ENCODE measurements at regions of chr13 and their contacts with region 1.

Region 1: GRCh38 chr13:29472332-29472961 is 123.0 kb downstream of the SLC7A1 start:
- DNase-seq: peak; percentile 41 to 69 (median 51)
- ATAC-seq: peak; percentile 87
- H3K4me3 ChIP-seq: no peak overlapping the region
- H3K27ac ChIP-seq: no peak overlapping the region
- H3K4me1 ChIP-seq: peaks cover 0 to 8% of the 10 kb centered on the region in 2 experiments; a peak in 1 of 5 replicates
- H3K27me3 ChIP-seq: no peaks in the 10 kb centered on the region; a peak in 1 of 5 replicates
- CTCF ChIP-seq: peak; percentile 94 to 100 (median 99)
- EP300 ChIP-seq: no peak
- POLR2A ChIP-seq: no peak
- RAD21 ChIP-seq: peak; percentile 65 to 82

Region 2: DNA sequence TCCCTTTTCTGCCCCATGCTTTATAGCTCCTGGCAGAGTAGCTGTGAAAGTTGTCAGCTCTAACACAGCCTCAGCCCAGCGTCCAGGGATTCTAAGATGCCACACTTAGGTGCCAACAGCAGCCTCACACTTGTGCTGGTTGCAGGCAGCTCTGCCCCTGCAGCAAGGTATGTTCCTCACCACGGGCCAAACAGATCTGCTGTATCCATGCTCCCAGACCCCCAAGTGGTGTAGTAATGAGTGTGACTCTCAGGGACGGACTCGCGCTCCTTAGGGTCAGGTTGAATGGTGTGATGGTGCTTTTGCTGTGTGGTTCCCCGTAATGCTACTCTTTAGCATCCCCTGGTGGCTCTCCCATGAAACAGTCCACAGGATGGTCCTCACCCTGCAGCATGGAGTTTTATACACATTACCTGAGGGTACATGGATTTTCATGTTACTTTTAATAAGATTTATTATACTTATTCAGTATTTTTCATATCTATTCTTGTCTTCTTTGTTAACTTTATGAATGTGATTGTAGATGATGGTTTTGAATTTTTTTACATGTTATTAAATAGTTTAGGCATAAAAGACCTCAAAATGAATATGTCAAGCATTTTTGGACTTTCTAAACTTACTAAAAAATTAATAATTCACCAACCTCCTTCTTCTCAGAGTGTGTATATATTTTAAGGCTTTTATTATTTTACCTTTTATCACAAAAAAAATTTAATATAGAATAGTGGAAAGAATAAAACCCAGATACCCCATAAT is 109.4 kb before region 1 on chr13:
- CTCF ChIA-PET with region 1: interaction called, 3 read pairs
- POLR2A ChIA-PET with region 1: no interaction called
- in situ Hi-C with region 1: no loop called
- intact Hi-C with region 1: loop called (anchors 10 kb)
- DNase-seq: peak; percentile 47 to 57 (median 48)
- ATAC-seq: peak; percentile 94
- H3K4me3 ChIP-seq: no peak overlapping the region
- H3K27ac ChIP-seq: no peak overlapping the region
- H3K4me1 ChIP-seq: 0 out of 5 replicates have a peak, but pooled peaks cover 0 to 3% of the 10 kb centered on the region in 2 experiments
- H3K27me3 ChIP-seq: peaks cover 0 to 16% of the 10 kb centered on the region in 2 experiments; a peak in 3 of 5 replicates
- CTCF ChIP-seq: peak; percentile 69 to 83 (median 80)
- EP300 ChIP-seq: no peak
- POLR2A ChIP-seq: no peak
- RAD21 ChIP-seq: peak; percentile 43 to 72

Region 3: GRCh38 chr13:29402166-29402636 is 70.2 kb before region 1 on chr13:
- CTCF ChIA-PET with region 1: no interaction called
- POLR2A ChIA-PET with region 1: no interaction called
- in situ Hi-C with region 1: no loop called
- intact Hi-C with region 1: loop called (anchors 10 kb)
- DNase-seq: peak in 2 of 4 experiments; percentile 20
- ATAC-seq: peak; percentile 69
- H3K4me3 ChIP-seq: no peak overlapping the region
- H3K27ac ChIP-seq: no peak overlapping the region; the same call in 2 of the 3 replicates
- H3K4me1 ChIP-seq: no peaks in the 10 kb centered on the region; a peak in 3 of 5 replicates
- H3K27me3 ChIP-seq: no peaks in the 10 kb centered on the region
- CTCF ChIP-seq: no peak; a peak in 1 of 6 replicates
- EP300 ChIP-seq: peak; percentile 30; the same call in 1 of the 2 replicates
- POLR2A ChIP-seq: no peak
- RAD21 ChIP-seq: no peak; a peak in 1 of 4 replicates

Region 4: DNA sequence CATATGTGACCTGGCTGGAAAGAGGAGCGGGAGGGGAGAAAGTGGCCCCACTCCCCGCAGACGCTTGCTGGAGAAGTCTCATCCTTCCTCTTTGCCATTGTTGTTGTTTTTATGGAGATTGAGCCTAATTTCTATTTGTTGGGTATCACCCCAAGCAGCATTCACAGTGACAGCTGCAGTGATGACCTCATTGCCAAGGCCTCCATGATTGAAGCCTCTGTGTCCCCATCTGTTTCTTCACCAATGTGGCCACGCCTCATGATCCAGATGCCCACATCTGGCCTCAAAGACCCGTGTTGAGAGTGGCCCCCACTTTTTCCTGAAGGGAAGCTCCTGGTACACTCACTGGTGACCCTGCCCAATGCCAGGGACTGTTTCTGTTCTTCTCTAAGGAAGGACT is 31.1 kb before region 1 on chr13:
- CTCF ChIA-PET with region 1: no interaction called
- POLR2A ChIA-PET with region 1: no interaction called
- in situ Hi-C with region 1: no loop called
- intact Hi-C with region 1: no loop called
- DNase-seq: no peak
- ATAC-seq: no peak
- H3K4me3 ChIP-seq: no peak overlapping the region
- H3K27ac ChIP-seq: no peak overlapping the region
- H3K4me1 ChIP-seq: no peaks in the 10 kb centered on the region
- H3K27me3 ChIP-seq: peaks cover 0 to 4% of the 10 kb centered on the region in 2 experiments; a peak in 2 of 5 replicates
- CTCF ChIP-seq: no peak
- EP300 ChIP-seq: no peak
- POLR2A ChIP-seq: no peak
- RAD21 ChIP-seq: no peak

Region 5: DNA sequence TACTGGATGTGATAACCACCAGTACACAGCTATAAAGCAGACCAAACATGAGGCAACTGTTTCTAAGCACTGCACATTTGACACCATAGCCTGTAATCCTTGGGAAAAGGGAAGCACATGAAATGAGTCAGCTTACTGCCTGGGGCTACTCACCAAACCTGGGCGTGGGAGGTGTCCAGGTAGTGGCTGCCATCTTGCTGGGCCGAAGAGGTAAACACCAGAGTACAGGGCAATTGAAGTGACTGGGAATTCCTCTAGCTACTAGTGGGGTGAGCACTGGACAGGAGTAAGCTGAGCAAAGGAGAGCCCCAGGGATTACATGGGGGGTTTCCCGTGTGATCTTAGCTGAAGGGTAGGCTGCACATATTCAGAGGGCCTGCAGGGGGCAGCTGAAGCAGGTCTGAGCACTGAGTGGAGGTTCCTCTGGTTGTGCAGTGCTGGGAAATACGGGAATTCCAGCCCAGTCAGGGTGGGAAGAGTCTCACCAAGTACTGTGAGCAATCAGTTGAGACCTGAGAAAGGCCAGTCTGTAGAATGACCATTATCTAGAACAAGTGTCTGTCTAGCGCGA is 17.5 kb before region 1 on chr13:
- CTCF ChIA-PET with region 1: interaction called, 3 read pairs
- POLR2A ChIA-PET with region 1: no interaction called
- in situ Hi-C with region 1: no loop called
- intact Hi-C with region 1: loop called (anchors 1 kb)
- DNase-seq: peak; percentile 32 to 42 (median 38)
- ATAC-seq: peak; percentile 83
- H3K4me3 ChIP-seq: no peak overlapping the region
- H3K27ac ChIP-seq: peak overlapping the region; percentile 89
- H3K4me1 ChIP-seq: peaks cover 14 to 47% of the 10 kb centered on the region in 2 experiments
- H3K27me3 ChIP-seq: no peaks in the 10 kb centered on the region
- CTCF ChIP-seq: peak; percentile 57 to 68 (median 64)
- EP300 ChIP-seq: no peak
- POLR2A ChIP-seq: no peak
- RAD21 ChIP-seq: peak; percentile 24 to 58; a peak in 3 of 4 replicates

Measured in K562 (cell line).